Dorsolateral prefrontal cortex (tissue), 120 donors: ENCODE measurements at regions of chr2 and their contacts with region 1.

Region 1: DNA sequence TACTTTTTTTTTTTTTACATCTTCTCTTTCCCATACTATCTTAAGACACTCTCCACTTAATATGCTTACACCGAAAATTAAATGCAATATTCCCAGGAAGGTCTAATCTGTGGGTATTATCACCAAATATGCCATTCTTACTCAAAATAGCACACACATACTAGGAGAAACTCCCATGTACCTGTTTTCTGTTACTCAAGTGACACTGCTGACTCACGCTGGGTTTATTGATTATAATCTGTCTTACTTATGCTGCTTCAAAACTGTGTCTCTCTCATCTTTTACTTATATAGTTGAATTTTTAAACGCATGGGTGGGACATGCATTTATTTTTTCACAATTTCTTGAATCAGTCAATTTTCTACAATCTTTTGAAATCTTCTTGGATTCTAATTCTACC is 29.9 kb downstream of the MRPL19 start:
- DNase-seq: no peak
- H3K4me3 ChIP-seq: no peak overlapping the region
- H3K27ac ChIP-seq: peak overlapping the region in 10 of 59 donors; percentile 18 to 85 (median 60)
- H3K27me3 ChIP-seq: no peaks in the 10 kb centered on the region
- CTCF ChIP-seq: no peak

Region 2: DNA sequence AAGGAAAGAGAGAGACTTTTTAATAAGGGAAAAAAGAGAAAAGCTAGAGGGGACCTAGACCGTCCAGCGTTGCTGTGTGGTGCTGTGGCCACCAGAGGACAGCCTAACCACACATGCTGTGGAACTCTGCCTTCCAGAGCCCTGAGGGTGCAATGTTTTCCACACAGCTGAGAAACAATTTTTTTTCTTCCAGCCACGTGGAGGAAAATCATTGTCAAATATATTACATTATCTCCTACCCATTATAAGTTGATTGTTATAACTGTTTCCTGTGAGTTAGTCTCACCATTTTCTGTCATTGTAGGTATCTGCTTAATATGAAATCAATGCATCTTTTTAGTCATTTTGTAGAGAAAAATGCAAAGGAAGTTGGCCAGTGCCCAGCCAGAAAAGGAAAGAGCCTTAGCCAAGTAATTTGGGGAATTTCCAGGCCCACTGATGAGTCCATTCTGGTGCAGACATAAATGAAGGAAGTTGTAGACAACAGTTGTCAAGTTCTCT is 35.8 kb before region 1 on chr2:
- intact Hi-C with region 1: loop called in 1 of 2 experiments (anchors 5 kb)
- DNase-seq: peak; percentile 66 to 77 (median 70)
- H3K4me3 ChIP-seq: peak overlapping the region in 5 of 59 donors; percentile 1 to 27 (median 21)
- H3K27ac ChIP-seq: peak overlapping the region in 33 of 59 donors; percentile 2 to 79 (median 35)
- H3K27me3 ChIP-seq: peaks cover 0 to 2% (median 0%) of the 10 kb centered on the region in 45 donors
- CTCF ChIP-seq: peak; percentile 88 to 100 (median 98)